Panc1 (cell line): ENCODE measurements at regions of chr6 and their contacts with region 1.

Region 1: GRCh38 chr6:50524341-50524740 is 189.0 kb upstream of the TFAP2D start:
- DNase-seq: no peak
- ATAC-seq: no peak
- H3K4me3 ChIP-seq: no peak overlapping the region
- H3K27ac ChIP-seq: no peak overlapping the region
- H3K4me1 ChIP-seq: no peaks in the 10 kb centered on the region
- H3K27me3 ChIP-seq: no peaks in the 10 kb centered on the region
- CTCF ChIP-seq: no peak

Region 2: DNA sequence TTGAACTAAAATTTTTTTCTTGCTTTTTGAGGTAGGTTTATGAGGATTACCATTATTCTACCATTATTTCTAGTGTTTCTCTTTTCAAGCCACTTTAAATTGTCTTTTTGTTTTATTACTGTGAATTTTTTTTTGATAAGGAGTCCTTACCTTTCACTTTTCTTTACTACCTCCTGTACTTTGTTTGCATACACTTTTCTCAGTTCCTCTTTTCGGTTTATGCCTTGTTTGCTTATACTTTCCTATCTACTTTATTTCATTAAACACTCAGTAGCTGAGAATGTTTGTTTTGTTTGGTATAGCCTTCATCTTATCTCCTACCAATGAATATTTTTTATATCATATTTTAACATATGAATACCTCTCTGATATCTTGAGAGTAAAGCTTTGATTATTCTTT is 442.2 kb after region 1 on chr6:
- CTCF ChIA-PET with region 1: interaction called, 13 read pairs
- POLR2A ChIA-PET with region 1: no interaction called
- in situ Hi-C with region 1: no loop called
- intact Hi-C with region 1: no loop called
- DNase-seq: no peak
- ATAC-seq: no peak
- H3K4me3 ChIP-seq: no peak overlapping the region
- H3K27ac ChIP-seq: no peak overlapping the region
- H3K4me1 ChIP-seq: no peaks in the 10 kb centered on the region
- H3K27me3 ChIP-seq: no peaks in the 10 kb centered on the region
- CTCF ChIP-seq: no peak

Region 3: GRCh38 chr6:51025082-51025777 is 500.9 kb after region 1 on chr6:
- CTCF ChIA-PET with region 1: no interaction called
- POLR2A ChIA-PET with region 1: no interaction called
- in situ Hi-C with region 1: no loop called
- intact Hi-C with region 1: no loop called
- DNase-seq: peak; percentile 69
- ATAC-seq: peak; percentile 88
- H3K4me3 ChIP-seq: peak overlapping the region in 1 of 2 experiments; percentile 29; a peak in 2 of 4 replicates
- H3K27ac ChIP-seq: peak overlapping the region; percentile 50; the same call in 1 of the 2 replicates
- H3K4me1 ChIP-seq: no peaks in the 10 kb centered on the region; the same call in 1 of the 2 replicates
- H3K27me3 ChIP-seq: no peaks in the 10 kb centered on the region
- CTCF ChIP-seq: no peak